ENCODE measurements at regions of chr9 and their contacts with region 1.

Region 1: GRCh38 chr9:36400332-36401163 is 479 bp upstream of the RNF38 start:
- DNase-seq: peak; percentile 96
- ATAC-seq: peak; percentile 77
- H3K4me3 Mint-ChIP-seq: peak overlapping the region; percentile 93
- H3K27ac Mint-ChIP-seq: peak overlapping the region; percentile 98
- H3K4me1 Mint-ChIP-seq: peaks cover 39% of the 10 kb centered on the region
- H3K27me3 Mint-ChIP-seq: no peaks in the 10 kb centered on the region

Region 2: GRCh38 chr9:35829084-35829763 is 571.3 kb before region 1 on chr9 and contains the start of gene TMEM8B:
- CTCF ChIA-PET with region 1: no interaction called
- POLR2A ChIA-PET with region 1: no interaction called
- intact Hi-C with region 1: loop called in 1 of 2 experiments (anchors 5 kb)
- DNase-seq: peak; percentile 98
- ATAC-seq: peak; percentile 92
- H3K4me3 Mint-ChIP-seq: peak within 1 kb of the TSS; percentile 78
- H3K27ac Mint-ChIP-seq: peak within 1 kb of the TSS; percentile 78
- H3K4me1 Mint-ChIP-seq: peaks cover 13% of the 10 kb centered on the region
- H3K27me3 Mint-ChIP-seq: no peaks in the 10 kb centered on the region
- total RNA-seq, gene TMEM8B: 5.8 to 6.9 TPM

Region 3: GRCh38 chr9:36258208-36258988 is 142.2 kb before region 1 on chr9 and contains the start of gene GNE:
- CTCF ChIA-PET with region 1: no interaction called
- POLR2A ChIA-PET with region 1: no interaction called
- intact Hi-C with region 1: loop called (anchors 1 to 5 kb)
- DNase-seq: peak; percentile 99
- ATAC-seq: peak; percentile 85
- H3K4me3 Mint-ChIP-seq: peak within 1 kb of the TSS; percentile 91
- H3K27ac Mint-ChIP-seq: peak within 1 kb of the TSS; percentile 90
- H3K4me1 Mint-ChIP-seq: peaks cover 8% of the 10 kb centered on the region
- H3K27me3 Mint-ChIP-seq: no peaks in the 10 kb centered on the region
- total RNA-seq, gene GNE: 17.0 to 19.0 TPM

Region 4: DNA sequence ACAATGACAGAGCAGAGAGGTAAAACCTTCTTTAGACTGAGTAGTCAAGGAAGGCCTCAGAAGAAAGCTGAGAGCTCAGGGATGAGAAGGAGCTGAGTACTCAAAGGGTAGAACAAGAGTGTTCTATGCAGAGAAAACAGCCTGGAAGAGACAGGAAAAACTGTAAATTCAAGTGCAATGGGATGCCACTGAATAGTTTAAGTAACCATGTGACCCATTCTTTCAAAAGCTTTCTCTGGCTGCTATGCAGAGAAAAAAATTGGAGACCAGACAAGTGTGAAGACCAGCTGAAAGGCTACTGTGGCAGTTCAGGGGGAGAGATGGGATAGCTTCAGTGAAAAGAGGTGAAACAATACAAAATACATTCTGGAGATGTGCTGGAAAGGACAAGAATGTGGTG is 60.8 kb after region 1 on chr9:
- CTCF ChIA-PET with region 1: interaction called, 23 read pairs
- POLR2A ChIA-PET with region 1: interaction called, 3 read pairs
- intact Hi-C with region 1: loop called in 1 of 2 experiments (anchors 2 kb)
- DNase-seq: no peak
- ATAC-seq: no peak
- H3K4me3 Mint-ChIP-seq: no peak overlapping the region
- H3K27ac Mint-ChIP-seq: no peak overlapping the region
- H3K4me1 Mint-ChIP-seq: peaks cover 56% of the 10 kb centered on the region
- H3K27me3 Mint-ChIP-seq: no peaks in the 10 kb centered on the region

Region 5: GRCh38 chr9:36492865-36493264 is 92.3 kb after region 1 on chr9:
- CTCF ChIA-PET with region 1: no interaction called
- POLR2A ChIA-PET with region 1: no interaction called
- intact Hi-C with region 1: loop called (anchors 1 to 5 kb)
- DNase-seq: peak; percentile 24
- ATAC-seq: peak; percentile 70
- H3K4me3 Mint-ChIP-seq: peak overlapping the region; percentile 61
- H3K27ac Mint-ChIP-seq: peak overlapping the region; percentile 88
- H3K4me1 Mint-ChIP-seq: peaks cover 66% of the 10 kb centered on the region
- H3K27me3 Mint-ChIP-seq: no peaks in the 10 kb centered on the region

Region 6: GRCh38 chr9:36721846-36722572 is 321.5 kb after region 1 on chr9:
- CTCF ChIA-PET with region 1: no interaction called
- POLR2A ChIA-PET with region 1: no interaction called
- intact Hi-C with region 1: no loop called
- DNase-seq: no peak
- ATAC-seq: no peak
- H3K4me3 Mint-ChIP-seq: no peak overlapping the region
- H3K27ac Mint-ChIP-seq: no peak overlapping the region
- H3K4me1 Mint-ChIP-seq: no peaks in the 10 kb centered on the region
- H3K27me3 Mint-ChIP-seq: no peaks in the 10 kb centered on the region

Region 7: DNA sequence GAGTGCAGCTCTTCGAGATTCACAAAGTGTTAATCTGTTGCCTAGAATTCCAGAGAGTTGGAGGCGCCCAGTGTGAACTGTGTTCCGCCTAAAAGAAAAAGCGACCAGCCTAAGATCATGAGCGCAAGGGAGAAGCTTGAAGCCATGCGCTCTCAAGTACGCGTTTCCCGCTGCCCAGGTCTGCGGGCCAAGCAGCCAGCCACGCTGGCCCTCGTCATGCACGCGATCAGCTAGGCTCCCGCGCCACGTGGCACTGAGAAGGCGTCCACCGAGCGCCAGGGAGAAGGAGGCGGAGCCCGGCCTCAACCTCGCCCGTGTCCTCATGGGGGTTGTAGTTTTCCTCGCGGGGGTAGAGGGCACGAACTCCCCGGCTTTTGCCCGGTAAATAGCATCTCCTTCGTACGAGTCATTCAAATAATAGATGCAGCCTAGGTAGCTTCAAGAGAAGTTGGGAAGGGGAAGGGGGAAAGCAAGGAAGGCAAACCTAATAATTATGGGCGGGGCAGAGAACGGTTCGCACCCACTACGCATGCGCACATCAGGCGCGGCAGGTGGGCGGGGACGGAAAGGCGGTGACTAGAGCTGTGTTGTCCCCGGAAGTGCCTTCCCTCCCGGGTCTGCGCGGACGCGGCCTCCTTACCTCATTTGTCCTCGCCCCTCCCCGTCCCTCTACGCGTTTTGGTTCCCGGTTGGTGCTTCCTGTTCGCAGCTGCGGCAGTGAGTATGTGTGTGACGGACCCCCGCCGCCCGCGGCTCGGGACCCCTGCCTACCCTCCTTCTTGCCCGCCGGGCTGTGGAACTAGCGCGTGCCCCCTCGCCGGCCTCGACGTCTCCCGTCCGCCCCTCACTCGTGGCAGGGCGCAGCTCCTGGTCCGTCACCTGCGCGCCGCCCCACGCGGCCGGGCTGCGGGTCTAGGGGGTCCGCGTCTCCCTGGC is 719.6 kb after region 1 on chr9 and contains the start of gene ZCCHC7:
- CTCF ChIA-PET with region 1: no interaction called
- POLR2A ChIA-PET with region 1: no interaction called
- intact Hi-C with region 1: loop called in 1 of 2 experiments (anchors 1 kb)
- DNase-seq: peak; percentile 98
- ATAC-seq: peak; percentile 98
- H3K4me3 Mint-ChIP-seq: peak within 1 kb of the TSS; percentile 80
- H3K27ac Mint-ChIP-seq: peak within 1 kb of the TSS; percentile 96
- H3K4me1 Mint-ChIP-seq: peaks cover 31% of the 10 kb centered on the region
- H3K27me3 Mint-ChIP-seq: no peaks in the 10 kb centered on the region
- total RNA-seq, gene ZCCHC7: 29.9 to 50.2 TPM